Heart right ventricle (tissue), 16 donors: ENCODE measurements at regions of chr19 and their contacts with region 1.

Region 1: DNA sequence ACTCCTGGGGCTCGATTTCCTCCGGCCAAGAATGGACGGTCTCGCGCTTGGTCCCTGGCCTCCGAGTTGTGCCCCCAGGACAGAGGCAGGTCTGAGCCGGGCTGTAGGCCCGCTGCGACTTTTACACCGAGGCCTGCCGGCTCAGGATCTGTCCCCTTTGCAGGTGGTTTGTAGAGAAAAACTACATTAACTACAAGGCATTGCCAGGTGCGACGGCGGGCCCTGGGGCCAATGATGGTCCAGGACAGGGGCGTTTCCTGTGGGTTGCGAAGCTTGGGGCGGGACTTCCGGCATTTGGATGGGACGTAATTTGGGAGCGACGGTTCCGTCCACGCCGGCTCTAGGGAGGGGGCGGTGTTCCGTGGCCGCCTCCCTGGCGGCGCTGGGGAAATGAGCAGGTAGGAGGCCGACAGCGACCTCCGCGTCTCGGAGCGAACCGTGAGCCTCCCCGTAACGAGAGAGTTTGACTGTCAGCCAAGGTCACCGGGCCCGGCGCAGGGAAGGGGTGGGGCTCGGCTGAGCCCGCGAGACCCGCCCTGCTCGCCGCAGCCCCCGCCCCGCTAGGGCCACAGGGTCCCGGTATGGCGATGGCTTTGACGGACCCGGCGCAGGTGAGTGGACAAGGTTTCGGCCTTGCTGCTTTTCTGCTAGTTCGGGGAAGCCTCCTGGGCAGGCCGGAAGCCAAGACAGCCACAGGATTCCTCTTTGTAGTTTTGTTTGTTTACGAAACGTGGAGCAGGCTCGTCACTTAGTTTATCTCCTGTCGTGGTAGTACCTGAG is at the start of gene ZNF805:
- DNase-seq: peak; percentile 97 to 98
- ATAC-seq: peak; percentile 98 to 100 (median 99)
- H3K4me3 ChIP-seq: peak within 1 kb of the TSS; percentile 75 to 94 (median 88)
- H3K27ac ChIP-seq: peak within 1 kb of the TSS; percentile 65 to 96 (median 94)
- H3K4me1 ChIP-seq: peaks cover 7 to 34% (median 22%) of the 10 kb centered on the region in 9 donors
- H3K27me3 ChIP-seq: no peaks in the 10 kb centered on the region
- CTCF ChIP-seq: peak in 3 of 9 donors; percentile 18 to 36 (median 36)
- total RNA-seq, gene ZNF805: 9.4 to 14.7 (median 11.5) TPM

Region 2: DNA sequence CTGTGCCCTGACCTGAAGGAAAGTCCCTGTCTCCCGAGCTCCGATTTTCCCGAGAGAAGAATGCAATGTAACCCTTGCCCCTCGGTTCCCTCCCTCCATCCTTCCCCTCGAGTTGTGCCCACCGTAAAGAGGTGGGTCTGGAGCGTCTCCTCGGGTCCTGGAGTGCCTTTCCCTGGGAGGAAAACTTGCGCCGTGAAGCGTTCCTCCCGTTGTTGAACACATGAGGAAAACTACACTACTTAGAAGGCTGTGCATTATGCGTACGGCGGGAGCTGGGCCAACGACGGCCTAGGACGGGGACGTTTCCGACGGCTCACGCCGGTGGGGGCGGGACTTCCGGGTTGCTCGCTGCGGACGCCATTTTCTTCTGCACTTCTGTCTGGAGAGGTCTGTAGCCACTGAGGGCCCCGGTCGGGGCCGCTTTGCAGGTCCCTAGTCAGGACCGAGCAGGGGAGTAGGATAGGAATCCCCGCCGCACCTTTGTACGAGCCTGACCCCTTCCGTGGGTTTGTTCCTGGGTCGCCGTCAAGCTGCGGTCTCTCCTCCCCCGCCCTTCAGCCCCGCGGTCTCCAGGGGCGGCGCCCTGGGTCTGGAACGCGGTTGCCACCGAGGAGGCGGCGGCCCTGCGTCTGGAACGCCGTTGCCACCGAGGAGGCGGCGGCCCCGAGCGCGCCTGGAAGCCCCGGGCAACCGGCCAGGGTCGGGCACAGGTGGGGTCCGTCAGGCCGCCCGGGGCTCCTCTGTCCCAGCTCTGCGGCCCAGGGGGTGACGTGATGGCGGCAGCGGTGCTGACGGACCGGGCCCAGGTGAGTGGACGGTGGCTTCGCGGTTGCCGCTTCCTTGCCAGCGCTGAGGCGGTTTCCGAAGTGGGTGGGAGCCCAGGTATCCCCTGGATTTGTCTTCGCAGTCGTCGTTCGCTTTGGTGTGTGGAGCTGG is 49.1 kb before region 1 on chr19 and contains the start of gene ZNF264:
- intact Hi-C with region 1: loop called in 1 of 10 experiments (anchors 5 kb)
- DNase-seq: peak; percentile 94 to 95
- ATAC-seq: peak; percentile 98 to 100 (median 99)
- H3K4me3 ChIP-seq: peak within 1 kb of the TSS; percentile 85 to 100 (median 98)
- H3K27ac ChIP-seq: peak within 1 kb of the TSS; percentile 52 to 97 (median 92)
- H3K4me1 ChIP-seq: peaks cover 0 to 30% (median 23%) of the 10 kb centered on the region in 9 donors
- H3K27me3 ChIP-seq: peaks cover 0 to 8% (median 0%) of the 10 kb centered on the region in 7 donors
- CTCF ChIP-seq: peak in 2 of 9 donors; percentile 12 to 18
- total RNA-seq, gene ZNF264: 16.5 to 23.8 (median 20.7) TPM

Region 3: GRCh38 chr19:57350877-57351805 is 110.6 kb after region 1 on chr19 and contains the start of gene ZNF304:
- intact Hi-C with region 1: loop called in 2 of 10 experiments (anchors 1 to 5 kb)
- DNase-seq: peak; percentile 93 to 96
- ATAC-seq: peak; percentile 96 to 100 (median 99)
- H3K4me3 ChIP-seq: peak within 1 kb of the TSS; percentile 77 to 100 (median 92)
- H3K27ac ChIP-seq: peak within 1 kb of the TSS; percentile 45 to 94 (median 90)
- H3K4me1 ChIP-seq: peaks cover 0 to 45% (median 25%) of the 10 kb centered on the region in 9 donors
- H3K27me3 ChIP-seq: no peaks in the 10 kb centered on the region
- CTCF ChIP-seq: no peak
- total RNA-seq, gene ZNF304: 8.0 to 15.7 (median 11.4) TPM